Activated CD4-positive, alpha-beta memory T cell treated with anti-CD3 and anti-CD28 coated beads for 36 hours (primary cell): ENCODE measurements at regions of chr5 and their contacts with region 1.

Region 1: DNA sequence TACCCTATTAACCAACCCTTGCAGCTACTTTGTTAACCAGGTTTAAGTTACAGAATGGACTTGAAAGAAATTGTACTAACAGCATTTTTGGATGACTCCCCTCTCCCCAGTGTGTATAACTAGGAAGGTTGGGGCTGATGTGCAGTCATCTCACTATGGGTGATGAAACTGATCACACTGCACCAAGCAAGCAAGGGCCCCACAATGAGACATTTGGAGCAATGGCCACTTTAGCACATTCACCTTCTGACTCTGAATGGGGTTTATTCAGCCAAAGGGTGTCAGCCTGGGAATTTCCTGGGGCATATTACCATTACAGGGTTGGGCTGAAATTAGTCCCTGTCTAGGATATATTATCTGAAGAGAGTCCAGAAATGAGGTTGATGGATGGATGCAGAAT is 18.7 kb upstream of the CYFIP2 start:
- DNase-seq: peak; percentile 79
- H3K4me3 Mint-ChIP-seq: peak overlapping the region; percentile 6
- H3K27ac Mint-ChIP-seq: peak overlapping the region; percentile 89
- H3K4me1 Mint-ChIP-seq: peaks cover 91% of the 10 kb centered on the region
- H3K27me3 Mint-ChIP-seq: no peaks in the 10 kb centered on the region

Region 2: DNA sequence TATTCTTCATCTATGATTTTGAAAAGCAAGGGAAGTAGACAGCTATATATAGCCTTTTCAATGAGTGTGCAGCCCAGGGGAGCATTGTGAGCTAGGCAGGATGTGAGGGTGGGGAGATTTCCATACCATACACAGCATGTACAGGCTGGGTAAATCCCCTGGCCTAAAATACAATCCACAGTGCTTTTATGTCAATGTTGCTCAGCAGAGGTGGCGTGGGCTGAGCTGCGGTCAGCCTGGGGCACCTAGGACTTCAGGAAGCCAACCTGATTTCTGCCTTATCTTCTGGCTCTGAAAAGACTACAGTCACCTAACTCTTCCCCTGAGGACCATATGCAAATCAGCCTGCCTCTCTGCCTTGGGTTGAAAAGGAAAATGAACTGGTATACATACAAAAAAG is 74.9 kb before region 1 on chr5:
- CTCF ChIA-PET with region 1: no interaction called
- POLR2A ChIA-PET with region 1: interaction called, 5 read pairs
- intact Hi-C with region 1: loop called (anchors 1 kb)
- DNase-seq: peak; percentile 96
- H3K4me3 Mint-ChIP-seq: peak overlapping the region; percentile 68
- H3K27ac Mint-ChIP-seq: peak overlapping the region; percentile 95
- H3K4me1 Mint-ChIP-seq: peaks cover 83% of the 10 kb centered on the region
- H3K27me3 Mint-ChIP-seq: no peaks in the 10 kb centered on the region

Region 3: GRCh38 chr5:157236423-157236822 is 10.8 kb before region 1 on chr5:
- CTCF ChIA-PET with region 1: interaction called, 4 read pairs
- POLR2A ChIA-PET with region 1: interaction called, 4 read pairs
- intact Hi-C with region 1: loop called (anchors 1 kb)
- DNase-seq: no peak
- H3K4me3 Mint-ChIP-seq: no peak overlapping the region
- H3K27ac Mint-ChIP-seq: peak overlapping the region; percentile 67
- H3K4me1 Mint-ChIP-seq: peaks cover 73% of the 10 kb centered on the region
- H3K27me3 Mint-ChIP-seq: no peaks in the 10 kb centered on the region